Dorsolateral prefrontal cortex (tissue), 120 donors: ENCODE measurements at regions of chr11 and their contacts with region 1.

Region 1: DNA sequence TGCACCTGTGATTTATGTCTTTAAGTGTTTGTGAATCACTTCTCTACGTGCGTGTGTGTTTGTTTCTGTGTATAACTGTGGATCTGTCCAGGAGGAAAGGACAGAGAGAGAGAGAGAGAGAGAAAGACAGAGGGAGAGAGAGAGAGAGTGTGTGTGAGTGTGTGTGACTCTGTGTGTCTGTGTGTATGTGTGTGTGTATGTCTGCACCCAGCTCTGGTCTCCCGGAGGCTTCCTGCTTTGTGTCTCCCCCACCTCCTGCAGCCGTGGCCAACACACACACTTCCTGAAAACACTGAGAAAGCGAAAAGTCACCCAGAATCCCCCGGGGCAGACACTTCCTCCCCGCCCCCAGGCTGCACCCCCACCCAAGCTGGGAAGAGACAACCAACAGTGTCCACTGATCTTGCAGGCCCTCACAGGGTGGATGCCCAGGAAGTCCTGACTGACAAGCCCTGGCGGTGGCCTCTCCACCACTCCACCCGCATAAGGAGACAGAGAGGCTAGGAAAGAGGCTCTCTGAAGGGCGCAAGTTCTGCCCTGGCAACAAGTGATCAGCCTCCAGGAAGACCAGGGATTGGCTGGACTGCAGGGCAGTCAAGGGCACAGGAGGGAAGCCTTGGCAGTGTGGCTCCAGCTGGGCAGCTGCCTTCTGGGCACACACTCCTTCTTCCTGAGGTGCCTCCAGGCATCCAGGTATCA is 30.0 kb downstream of the ARAP1 start:
- DNase-seq: peak; percentile 65 to 91 (median 86)
- H3K4me3 ChIP-seq: peak overlapping the region; percentile 12 to 75 (median 62)
- H3K27ac ChIP-seq: peak overlapping the region; percentile 29 to 91 (median 81)
- H3K27me3 ChIP-seq: no peaks in the 10 kb centered on the region
- CTCF ChIP-seq: peak in 6 of 56 donors; percentile 6 to 21 (median 12)

Region 2: GRCh38 chr11:72814286-72815109 is 92.3 kb after region 1 on chr11 and contains the start of gene ATG16L2:
- intact Hi-C with region 1: loop called in 1 of 2 experiments (anchors 2 kb)
- DNase-seq: peak in 8 of 10 donors; percentile 76 to 90 (median 82)
- H3K4me3 ChIP-seq: peak within 1 kb of the TSS; percentile 64 to 99 (median 92)
- H3K27ac ChIP-seq: peak within 1 kb of the TSS; percentile 81 to 99 (median 96)
- H3K27me3 ChIP-seq: no peaks in the 10 kb centered on the region
- CTCF ChIP-seq: peak in 50 of 56 donors; percentile 8 to 73 (median 51)
- total RNA-seq, gene ATG16L2: 17.7 to 47.0 (median 30.9) TPM

Region 3: DNA sequence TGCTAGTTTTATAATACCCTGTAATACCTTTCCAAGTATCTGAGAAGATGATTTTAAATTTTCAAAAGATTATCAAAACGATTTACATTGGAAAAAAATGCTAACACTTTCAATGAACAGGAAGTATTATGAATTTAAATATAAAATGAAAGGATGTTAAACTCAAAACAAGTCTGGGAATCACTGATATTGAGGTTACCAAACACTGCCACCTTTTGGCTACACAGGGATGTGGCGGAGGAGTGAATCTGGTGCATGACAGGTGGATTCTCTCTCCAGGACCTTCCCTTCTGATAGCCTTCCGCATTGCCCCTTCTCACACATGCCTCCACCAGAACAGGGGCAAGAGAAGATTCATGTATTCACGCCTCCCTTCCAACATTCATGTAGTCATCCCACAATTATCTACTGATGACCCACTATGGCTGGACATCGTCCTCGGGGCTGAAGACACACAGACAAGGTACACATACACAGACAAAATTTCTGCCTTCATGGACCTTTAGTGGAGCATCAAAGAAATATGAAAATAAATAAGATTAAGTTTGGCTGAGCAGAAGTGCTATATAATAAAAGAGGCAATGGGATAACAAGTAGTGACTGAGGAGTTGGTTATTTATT is 126.8 kb after region 1 on chr11:
- intact Hi-C with region 1: no loop called
- DNase-seq: peak in 1 of 10 donors; percentile 33
- H3K4me3 ChIP-seq: no peak overlapping the region
- H3K27ac ChIP-seq: peak overlapping the region in 1 of 59 donors; percentile 10
- H3K27me3 ChIP-seq: no peaks in the 10 kb centered on the region
- CTCF ChIP-seq: peak in 53 of 56 donors; percentile 27 to 71 (median 54)

Region 4: DNA sequence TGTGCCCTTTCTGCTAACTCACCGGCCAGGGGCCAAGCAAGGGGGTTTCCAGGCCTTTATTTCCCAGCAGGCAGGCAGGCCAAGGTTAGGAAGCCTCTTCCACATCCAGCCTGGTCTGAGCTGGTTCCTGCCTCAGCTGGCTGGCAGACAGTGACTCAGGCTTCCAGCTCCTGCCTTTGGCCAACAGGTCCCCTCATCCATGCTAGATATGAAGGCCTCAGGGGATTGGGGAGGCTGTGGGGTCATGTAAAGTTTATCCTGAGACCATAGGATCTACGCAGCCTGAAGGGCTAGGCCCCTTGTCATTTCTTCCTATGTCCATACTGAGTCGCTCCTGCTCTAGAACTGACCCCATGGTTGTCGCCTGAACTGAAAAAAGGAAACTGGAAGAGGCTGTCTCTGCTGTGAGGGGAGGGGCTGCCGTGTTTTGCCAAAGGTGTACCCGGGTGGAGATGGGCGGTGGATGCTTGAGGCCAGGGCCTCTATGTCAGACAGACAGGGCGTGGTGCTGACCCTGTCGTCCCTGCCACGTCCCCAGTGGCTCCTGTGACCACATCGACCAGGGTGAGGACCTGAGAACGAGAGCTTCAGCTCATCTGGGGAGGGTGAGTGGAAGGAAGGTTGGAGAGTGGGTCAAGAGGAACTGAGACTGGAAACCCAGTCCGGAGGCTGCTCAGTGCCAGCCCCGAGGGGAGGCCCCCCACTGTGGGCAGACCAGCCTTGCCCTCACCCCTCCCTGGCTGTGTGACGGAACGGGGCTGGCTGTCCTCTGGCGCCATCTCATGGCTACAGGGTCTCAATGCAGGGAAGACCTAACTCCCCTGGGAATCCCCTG is 566.9 kb after region 1 on chr11:
- intact Hi-C with region 1: loop called in 1 of 2 experiments (anchors 5 kb)
- DNase-seq: peak; percentile 37 to 78 (median 66)
- H3K4me3 ChIP-seq: peak overlapping the region in 35 of 59 donors; percentile 7 to 53 (median 29)
- H3K27ac ChIP-seq: peak overlapping the region in 33 of 59 donors; percentile 2 to 75 (median 48)
- H3K27me3 ChIP-seq: peaks cover 0 to 7% (median 0%) of the 10 kb centered on the region in 45 donors
- CTCF ChIP-seq: peak; percentile 67 to 95 (median 86)